ENCODE measurements at regions of chr3 and their contacts with region 1.

Region 1: DNA sequence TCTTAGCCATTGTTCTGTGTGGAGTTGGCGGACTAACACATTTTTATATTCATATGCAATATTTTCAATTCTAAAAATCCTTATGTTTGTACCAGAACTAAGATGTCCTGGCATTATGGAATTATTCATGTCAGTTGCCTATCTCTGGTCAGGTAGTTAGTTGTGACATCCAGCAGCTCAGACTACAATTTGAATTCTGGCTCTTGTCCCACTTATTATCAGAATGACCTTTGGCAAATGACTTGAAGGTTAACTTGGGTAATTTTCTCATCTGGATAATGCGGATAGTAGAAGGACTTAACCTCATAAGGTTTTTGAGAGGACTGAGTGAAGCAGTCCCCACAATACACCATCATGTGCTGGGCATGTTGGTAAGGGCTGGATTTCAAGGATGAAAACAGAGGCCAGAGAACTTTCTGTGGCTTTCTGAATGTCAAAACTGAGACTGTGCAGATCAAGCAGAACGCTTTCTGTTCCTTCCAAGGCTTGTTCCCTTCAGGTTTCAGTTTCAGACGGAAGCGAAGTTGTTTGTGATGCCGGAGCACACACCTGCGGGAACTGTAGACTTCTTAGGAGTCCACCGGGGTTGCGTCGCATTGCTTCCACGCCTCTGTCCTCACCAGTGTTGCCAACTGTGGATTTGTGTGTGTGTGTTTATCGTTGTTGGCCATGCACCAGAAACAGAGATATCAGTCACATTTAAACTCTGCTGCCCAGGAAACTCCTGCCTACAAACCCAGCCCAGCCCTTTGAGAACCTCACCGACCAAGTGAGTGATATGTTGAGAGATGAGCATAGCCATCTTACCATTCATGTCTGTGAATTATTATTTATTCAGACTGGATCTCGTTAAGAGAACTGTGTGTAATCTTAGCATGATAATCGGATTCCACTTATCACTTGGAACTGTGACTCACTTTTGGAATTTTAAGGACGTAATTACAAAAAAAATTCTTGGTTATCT is 76.0 kb downstream of the PTPRG start:
- DNase-seq: peak; percentile 75
- H3K4me3 ChIP-seq: peak overlapping the region; percentile 35 to 48 (median 46)
- H3K27ac ChIP-seq: peak overlapping the region; percentile 61 to 84 (median 82)
- H3K4me1 ChIP-seq: peaks cover 0 to 45% (median 23%) of the 10 kb centered on the region in 4 donors
- H3K27me3 ChIP-seq: no peaks in the 10 kb centered on the region
- CTCF ChIP-seq: no peak
- EP300 ChIP-seq: peak; percentile 12 to 74 (median 61)
- POLR2A ChIP-seq: no peak

Region 2: DNA sequence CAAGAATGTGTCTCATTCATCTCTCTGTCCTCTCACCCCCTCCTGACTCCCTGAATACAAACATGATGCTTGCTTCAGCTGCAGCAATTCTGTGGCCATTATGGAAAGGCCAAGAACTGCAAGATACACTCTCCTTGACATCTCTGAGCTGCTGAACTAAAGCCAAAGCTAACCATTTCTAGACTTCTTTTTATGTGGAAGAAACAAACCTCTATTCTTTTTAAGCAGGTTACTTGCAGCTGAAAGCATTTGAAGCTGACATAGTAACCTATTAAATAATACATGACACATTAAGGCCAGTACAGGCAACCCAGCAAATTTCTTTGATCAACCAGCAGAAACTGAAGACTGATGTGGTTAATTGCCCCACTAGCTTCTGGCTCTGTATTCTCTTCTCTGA is 403.6 kb before region 1 on chr3:
- intact Hi-C with region 1: no loop called
- DNase-seq: no peak
- H3K4me3 ChIP-seq: no peak overlapping the region
- H3K27ac ChIP-seq: no peak overlapping the region
- H3K4me1 ChIP-seq: no peaks in the 10 kb centered on the region
- H3K27me3 ChIP-seq: no peaks in the 10 kb centered on the region
- CTCF ChIP-seq: no peak
- EP300 ChIP-seq: no peak
- POLR2A ChIP-seq: no peak

Region 3: DNA sequence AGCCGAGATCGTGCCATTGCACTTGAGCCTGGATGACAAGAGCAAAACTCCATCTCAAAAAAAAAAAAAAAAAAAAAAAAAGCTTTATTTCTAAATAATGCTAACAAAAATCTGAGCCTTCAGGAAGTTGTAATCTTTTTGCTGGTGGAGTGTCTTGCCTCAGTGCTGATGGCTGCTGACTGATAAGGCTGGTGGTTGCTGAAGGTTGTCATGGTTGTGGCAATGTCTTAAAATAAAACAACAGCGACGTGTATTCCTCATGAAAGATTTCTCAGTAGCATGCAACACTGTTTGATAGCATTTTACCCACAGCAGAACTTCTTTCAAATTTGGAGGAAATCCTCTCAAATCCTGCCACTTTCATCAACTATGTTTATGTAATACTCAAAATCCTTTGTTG is 153.4 kb before region 1 on chr3:
- intact Hi-C with region 1: no loop called
- DNase-seq: no peak
- H3K4me3 ChIP-seq: no peak overlapping the region
- H3K27ac ChIP-seq: no peak overlapping the region
- H3K4me1 ChIP-seq: no peaks in the 10 kb centered on the region
- H3K27me3 ChIP-seq: no peaks in the 10 kb centered on the region
- CTCF ChIP-seq: no peak
- EP300 ChIP-seq: no peak
- POLR2A ChIP-seq: no peak

Region 4: DNA sequence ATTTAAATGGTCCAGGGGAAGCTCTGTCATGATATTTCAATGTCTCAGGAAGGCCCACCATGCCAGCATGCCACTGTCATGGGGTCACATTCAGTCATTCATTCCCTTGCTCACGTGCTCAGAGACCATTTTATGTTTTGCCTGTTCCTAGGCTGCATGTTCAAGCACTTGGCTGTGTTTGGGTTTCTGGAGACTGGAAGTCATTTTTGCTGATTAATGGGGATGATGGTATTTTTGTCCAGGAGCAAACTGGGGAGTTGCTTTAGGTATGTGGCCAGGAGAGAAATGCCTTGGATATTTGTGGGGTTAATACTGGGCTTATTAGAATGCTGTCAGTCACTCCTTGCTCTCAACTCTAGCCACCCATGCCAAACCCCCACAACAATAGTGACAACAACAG is 227.5 kb after region 1 on chr3:
- intact Hi-C with region 1: loop called (anchors 5 kb)
- DNase-seq: no peak
- H3K4me3 ChIP-seq: no peak overlapping the region
- H3K27ac ChIP-seq: peak overlapping the region in 1 of 4 donors; percentile 12
- H3K4me1 ChIP-seq: peaks cover 0 to 64% (median 59%) of the 10 kb centered on the region in 4 donors
- H3K27me3 ChIP-seq: no peaks in the 10 kb centered on the region
- CTCF ChIP-seq: no peak
- EP300 ChIP-seq: no peak
- POLR2A ChIP-seq: no peak

Region 5: DNA sequence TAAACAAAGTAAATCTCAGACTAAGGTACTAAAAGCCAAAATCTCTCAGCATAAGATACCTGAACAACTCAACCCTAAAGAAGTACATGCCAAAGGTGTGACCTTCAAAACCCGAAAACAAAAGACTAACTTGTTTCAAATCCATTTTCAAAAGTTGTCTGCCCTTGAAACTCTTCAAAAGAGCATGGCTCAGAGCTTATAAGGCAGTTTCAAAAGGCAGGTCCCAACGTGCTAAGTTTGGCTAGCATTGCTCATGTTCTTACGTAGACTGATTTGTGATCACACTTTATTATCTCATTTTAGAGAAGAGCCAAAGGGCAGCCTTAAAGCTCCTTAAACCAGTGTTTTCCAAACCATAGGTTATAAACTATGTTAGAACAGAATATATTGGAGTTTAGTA is 623.8 kb after region 1 on chr3:
- intact Hi-C with region 1: no loop called
- DNase-seq: no peak
- H3K4me3 ChIP-seq: no peak overlapping the region
- H3K27ac ChIP-seq: no peak overlapping the region
- H3K4me1 ChIP-seq: no peaks in the 10 kb centered on the region
- H3K27me3 ChIP-seq: no peaks in the 10 kb centered on the region
- CTCF ChIP-seq: no peak
- EP300 ChIP-seq: no peak
- POLR2A ChIP-seq: no peak